Heart left ventricle (tissue), 16 donors: ENCODE measurements at regions of chr20 and their contacts with region 1.

Region 1: DNA sequence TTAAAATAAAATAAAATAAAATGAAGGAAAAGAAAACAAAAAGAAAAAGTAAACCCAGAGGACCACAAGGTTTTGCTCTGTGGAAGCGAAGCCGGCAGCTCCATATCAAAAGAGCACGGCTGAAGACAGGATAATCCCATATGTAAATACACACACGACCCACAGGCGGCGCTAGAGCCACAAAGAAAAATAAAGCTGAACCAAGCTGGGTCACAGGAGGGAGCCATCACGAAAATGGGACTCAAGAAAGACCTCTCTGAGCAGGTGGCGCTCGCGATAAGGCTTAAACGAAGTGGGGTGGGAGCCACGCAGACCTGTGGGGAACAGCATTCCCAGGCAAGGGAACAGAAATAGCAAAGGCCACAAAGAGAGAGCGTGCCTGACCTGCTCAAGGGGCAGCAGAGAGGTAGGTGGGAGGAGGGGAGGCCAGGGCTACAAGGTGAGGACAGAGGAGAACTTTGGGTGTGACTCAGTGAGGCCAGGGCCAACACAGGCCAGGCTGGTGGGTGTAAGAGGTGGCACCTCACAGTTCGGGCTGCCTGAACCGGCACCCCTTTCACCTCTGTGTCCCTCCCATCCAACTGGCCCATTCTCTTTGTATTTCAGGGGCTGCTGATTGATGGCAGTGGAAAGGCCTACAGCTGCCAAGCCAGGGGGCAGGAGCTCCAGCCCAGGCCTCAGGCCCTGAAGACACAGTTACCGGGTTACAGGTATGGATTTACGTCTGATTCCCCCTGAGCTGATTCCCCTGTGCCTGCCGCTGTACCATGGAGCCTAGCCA is 26.0 kb downstream of the PTGIS start:
- DNase-seq: peak in 4 of 5 donors; percentile 51 to 67 (median 62)
- ATAC-seq: peak; percentile 31 to 82 (median 68)
- H3K4me3 ChIP-seq: no peak overlapping the region
- H3K27ac ChIP-seq: peak overlapping the region in 2 of 12 donors; percentile 3 to 7
- H3K4me1 ChIP-seq: peaks cover 0 to 2% (median 0%) of the 10 kb centered on the region in 12 donors
- H3K27me3 ChIP-seq: no peaks in the 10 kb centered on the region
- CTCF ChIP-seq: peak; percentile 70 to 84 (median 78)
- POLR2A ChIP-seq: no peak

Region 2: GRCh38 chr20:49846206-49846807 is 304.4 kb after region 1 on chr20:
- intact Hi-C with region 1: loop called in 9 of 10 experiments (anchors 2 to 10 kb)
- DNase-seq: peak in 1 of 5 donors; percentile 38
- ATAC-seq: peak; percentile 56 to 79 (median 62)
- H3K4me3 ChIP-seq: no peak overlapping the region
- H3K27ac ChIP-seq: no peak overlapping the region
- H3K4me1 ChIP-seq: peaks cover 0 to 25% (median 14%) of the 10 kb centered on the region in 12 donors
- H3K27me3 ChIP-seq: no peaks in the 10 kb centered on the region
- CTCF ChIP-seq: peak; percentile 42 to 72 (median 59)
- POLR2A ChIP-seq: no peak

Region 3: GRCh38 chr20:49853640-49854039 is 311.7 kb after region 1 on chr20:
- intact Hi-C with region 1: loop called in 8 of 10 experiments (anchors 5 to 10 kb)
- DNase-seq: no peak
- ATAC-seq: no peak
- H3K4me3 ChIP-seq: no peak overlapping the region
- H3K27ac ChIP-seq: no peak overlapping the region
- H3K4me1 ChIP-seq: peaks cover 0 to 37% (median 21%) of the 10 kb centered on the region in 12 donors
- H3K27me3 ChIP-seq: no peaks in the 10 kb centered on the region
- CTCF ChIP-seq: no peak
- POLR2A ChIP-seq: no peak

Region 4: GRCh38 chr20:49928401-49929141 is 386.6 kb after region 1 on chr20:
- intact Hi-C with region 1: loop called in 3 of 10 experiments (anchors 2 to 10 kb)
- DNase-seq: peak; percentile 65 to 81 (median 73)
- ATAC-seq: peak; percentile 80 to 87 (median 83)
- H3K4me3 ChIP-seq: no peak overlapping the region
- H3K27ac ChIP-seq: peak overlapping the region in 2 of 12 donors; percentile 7 to 61
- H3K4me1 ChIP-seq: peaks cover 0 to 18% (median 1%) of the 10 kb centered on the region in 12 donors
- H3K27me3 ChIP-seq: no peaks in the 10 kb centered on the region
- CTCF ChIP-seq: peak; percentile 86 to 97 (median 92)
- POLR2A ChIP-seq: no peak